ENCODE measurements at regions of chr1 and their contacts with region 1.

Region 1: GRCh38 chr1:236281654-236282424 is at the start of gene ERO1B:
- DNase-seq: peak; percentile 95 to 99 (median 97)
- ATAC-seq: peak; percentile 98
- H3K4me3 ChIP-seq: peak within 1 kb of the TSS; percentile 83
- H3K4me3 Mint-ChIP-seq: peak within 1 kb of the TSS; percentile 80 to 97 (median 94)
- H3K27ac ChIP-seq: peak within 1 kb of the TSS; percentile 82
- H3K27ac Mint-ChIP-seq: peak within 1 kb of the TSS; percentile 80 to 96 (median 95)
- H3K4me1 ChIP-seq: peaks cover 7 to 34% of the 10 kb centered on the region in 2 donors
- H3K4me1 Mint-ChIP-seq: peaks cover 29 to 82% (median 57%) of the 10 kb centered on the region in 7 donors
- H3K27me3 ChIP-seq: no peaks in the 10 kb centered on the region
- H3K27me3 Mint-ChIP-seq: peaks cover 0 to 10% (median 0%) of the 10 kb centered on the region in 5 donors
- total RNA-seq, gene ERO1B: 5.0 to 26.8 (median 16.0) TPM

Region 2: DNA sequence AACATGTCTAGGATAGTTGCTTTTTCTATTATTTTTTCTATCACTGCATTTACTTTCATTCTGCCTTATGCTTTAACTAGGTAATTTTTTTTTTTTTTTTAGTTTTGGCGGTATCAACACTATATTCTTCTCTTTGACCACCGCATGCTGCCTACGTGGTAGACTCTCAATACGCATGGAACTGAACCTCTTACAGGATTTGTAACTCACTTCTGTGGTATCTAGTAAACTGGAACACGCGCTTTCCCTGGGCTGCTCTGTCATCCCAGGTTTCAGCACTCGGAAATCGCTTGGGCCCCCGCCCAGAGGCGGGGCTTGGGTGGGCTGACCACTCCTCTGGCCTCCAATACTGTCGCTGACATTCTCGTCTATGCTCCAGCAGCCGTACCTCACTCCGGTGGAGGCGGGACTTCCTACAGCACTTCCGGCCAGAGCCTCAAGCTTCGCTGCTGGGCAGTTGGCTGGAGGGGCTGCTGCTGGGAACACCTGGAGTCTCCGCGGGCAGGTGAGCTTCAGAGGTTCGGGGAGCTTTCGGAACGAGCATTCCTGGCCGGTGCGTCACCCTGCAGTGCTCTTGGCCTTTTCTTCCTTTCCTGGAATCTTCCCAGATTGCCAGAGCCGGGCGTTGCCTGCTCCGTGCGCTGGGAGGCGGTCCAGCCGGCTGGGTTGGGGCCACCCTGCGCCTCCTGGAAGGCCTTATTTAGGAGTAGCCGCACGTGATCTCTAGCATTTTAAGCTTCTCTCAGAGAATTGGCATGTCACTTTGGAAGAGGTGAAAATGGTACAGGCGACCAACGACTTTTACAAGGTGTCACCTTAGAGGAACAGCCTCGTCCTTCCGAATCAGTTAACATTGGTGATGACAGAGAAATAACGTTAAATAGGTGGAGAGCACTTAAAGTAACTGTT is 914.6 kb before region 1 on chr1 and contains the start of gene TBCE:
- CTCF ChIA-PET with region 1: no interaction called
- POLR2A ChIA-PET with region 1: no interaction called
- intact Hi-C with region 1: loop called in 1 of 2 experiments (anchors 5 kb)
- DNase-seq: peak; percentile 61 to 89 (median 63)
- ATAC-seq: peak; percentile 99
- H3K4me3 ChIP-seq: peak within 1 kb of the TSS; percentile 90
- H3K4me3 Mint-ChIP-seq: peak within 1 kb of the TSS; percentile 91 to 99 (median 98)
- H3K27ac ChIP-seq: peak within 1 kb of the TSS; percentile 74
- H3K27ac Mint-ChIP-seq: peak within 1 kb of the TSS; percentile 86 to 97 (median 93)
- H3K4me1 ChIP-seq: peaks cover 0 to 11% of the 10 kb centered on the region in 2 donors
- H3K4me1 Mint-ChIP-seq: peaks cover 13 to 41% (median 38%) of the 10 kb centered on the region in 7 donors
- H3K27me3 ChIP-seq: no peaks in the 10 kb centered on the region
- H3K27me3 Mint-ChIP-seq: no peaks in the 10 kb centered on the region
- total RNA-seq, gene TBCE: 16.8 to 26.1 (median 20.6) TPM

Region 3: DNA sequence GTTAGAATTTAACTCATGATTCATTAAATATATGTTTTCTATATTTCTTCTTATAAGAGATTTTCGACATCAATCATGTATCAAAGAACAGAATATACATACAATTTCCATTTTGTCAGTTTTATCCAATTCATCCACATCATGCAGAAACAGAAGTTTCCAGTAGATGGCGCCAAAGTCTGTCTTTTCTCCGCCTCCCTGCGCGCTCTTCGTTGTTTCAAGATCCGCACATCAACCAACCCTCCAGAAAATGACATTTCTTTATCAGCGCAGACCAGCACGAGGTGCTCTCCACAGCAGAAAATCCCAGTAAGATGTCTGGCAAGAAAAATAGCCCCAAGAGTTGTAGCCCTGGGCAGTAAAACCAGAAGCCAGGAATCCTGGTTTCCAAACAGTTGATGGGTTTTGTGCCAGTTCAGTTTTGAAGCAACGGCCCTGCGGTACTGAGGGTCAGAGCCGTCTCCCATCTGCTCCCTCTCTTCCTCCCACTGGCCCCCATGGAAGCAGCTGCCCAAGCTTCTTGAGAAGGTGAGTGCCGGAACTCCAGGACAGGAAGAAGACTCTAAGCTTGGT is 178.1 kb before region 1 on chr1:
- CTCF ChIA-PET with region 1: no interaction called
- POLR2A ChIA-PET with region 1: no interaction called
- intact Hi-C with region 1: loop called in 1 of 2 experiments (anchors 5 kb)
- DNase-seq: peak; percentile 26 to 69 (median 51)
- ATAC-seq: peak; percentile 74
- H3K4me3 ChIP-seq: no peak overlapping the region
- H3K4me3 Mint-ChIP-seq: peak overlapping the region in 1 of 10 donors; percentile 12
- H3K27ac ChIP-seq: no peak overlapping the region
- H3K27ac Mint-ChIP-seq: no peak overlapping the region
- H3K4me1 ChIP-seq: no peaks in the 10 kb centered on the region
- H3K4me1 Mint-ChIP-seq: peaks cover 0 to 9% (median 3%) of the 10 kb centered on the region in 7 donors
- H3K27me3 ChIP-seq: no peaks in the 10 kb centered on the region
- H3K27me3 Mint-ChIP-seq: peaks cover 0 to 4% (median 0%) of the 10 kb centered on the region in 5 donors

Region 4: GRCh38 chr1:236394905-236395780 is 113.3 kb after region 1 on chr1:
- CTCF ChIA-PET with region 1: no interaction called
- POLR2A ChIA-PET with region 1: no interaction called
- intact Hi-C with region 1: loop called (anchors 1 to 5 kb)
- DNase-seq: peak in 3 of 9 donors; percentile 13 to 62 (median 29)
- ATAC-seq: peak; percentile 75
- H3K4me3 ChIP-seq: peak overlapping the region; percentile 70
- H3K4me3 Mint-ChIP-seq: peak overlapping the region; percentile 70 to 96 (median 86)
- H3K27ac ChIP-seq: no peak overlapping the region
- H3K27ac Mint-ChIP-seq: peak overlapping the region in 1 of 9 donors; percentile 86
- H3K4me1 ChIP-seq: peaks cover 3 to 10% of the 10 kb centered on the region in 2 donors
- H3K4me1 Mint-ChIP-seq: peaks cover 15 to 43% (median 22%) of the 10 kb centered on the region in 7 donors
- H3K27me3 ChIP-seq: peaks cover 0 to 5% of the 10 kb centered on the region in 2 donors
- H3K27me3 Mint-ChIP-seq: peaks cover 27 to 67% (median 51%) of the 10 kb centered on the region in 5 donors

Region 5: DNA sequence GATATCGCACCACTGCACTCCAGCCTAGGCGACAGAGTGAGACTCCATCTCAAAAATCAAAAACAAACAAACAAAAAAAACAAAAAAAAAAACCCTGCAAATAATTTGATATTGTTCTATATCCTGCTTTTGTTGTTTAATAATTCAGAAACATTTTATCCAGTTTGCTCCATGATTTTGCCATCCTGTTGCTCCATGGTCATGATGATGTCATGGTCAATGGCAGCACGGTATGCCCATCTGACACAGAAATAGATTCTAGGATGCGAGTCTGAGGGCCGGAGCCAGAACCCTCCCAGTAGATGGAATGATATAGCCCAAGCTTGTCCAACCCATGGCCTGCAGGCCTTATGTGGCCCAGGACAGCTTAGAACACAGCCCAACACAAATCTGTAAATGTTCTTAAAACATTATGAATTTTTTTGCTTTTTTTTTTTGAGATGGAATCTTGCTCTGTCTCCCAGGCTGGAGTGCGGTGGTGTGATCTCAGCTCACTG is 152.0 kb after region 1 on chr1:
- CTCF ChIA-PET with region 1: no interaction called
- POLR2A ChIA-PET with region 1: no interaction called
- intact Hi-C with region 1: no loop called
- DNase-seq: no peak
- ATAC-seq: no peak
- H3K4me3 ChIP-seq: no peak overlapping the region
- H3K4me3 Mint-ChIP-seq: no peak overlapping the region
- H3K27ac ChIP-seq: no peak overlapping the region
- H3K27ac Mint-ChIP-seq: no peak overlapping the region
- H3K4me1 ChIP-seq: no peaks in the 10 kb centered on the region
- H3K4me1 Mint-ChIP-seq: peaks cover 0 to 2% (median 0%) of the 10 kb centered on the region in 7 donors
- H3K27me3 ChIP-seq: no peaks in the 10 kb centered on the region
- H3K27me3 Mint-ChIP-seq: no peaks in the 10 kb centered on the region

Region 6: GRCh38 chr1:236523701-236524141 is 241.9 kb after region 1 on chr1 and contains the start of gene LGALS8:
- CTCF ChIA-PET with region 1: no interaction called
- POLR2A ChIA-PET with region 1: interaction called, 4 read pairs
- intact Hi-C with region 1: loop called (anchors 1 kb)
- DNase-seq: peak; percentile 68 to 87 (median 83)
- ATAC-seq: peak; percentile 90
- H3K4me3 ChIP-seq: peak within 1 kb of the TSS; percentile 70
- H3K4me3 Mint-ChIP-seq: peak within 1 kb of the TSS; percentile 93 to 100 (median 99)
- H3K27ac ChIP-seq: peak within 1 kb of the TSS; percentile 87
- H3K27ac Mint-ChIP-seq: peak within 1 kb of the TSS; percentile 97 to 99 (median 98)
- H3K4me1 ChIP-seq: peaks cover 4 to 5% of the 10 kb centered on the region in 2 donors
- H3K4me1 Mint-ChIP-seq: peaks cover 8 to 38% (median 35%) of the 10 kb centered on the region in 7 donors
- H3K27me3 ChIP-seq: no peaks in the 10 kb centered on the region
- H3K27me3 Mint-ChIP-seq: peaks cover 0 to 3% (median 0%) of the 10 kb centered on the region in 5 donors
- total RNA-seq, gene LGALS8: 114 to 143 (median 134) TPM

Region 7: GRCh38 chr1:236868625-236869467 is 587.0 kb after region 1 on chr1:
- CTCF ChIA-PET with region 1: no interaction called
- POLR2A ChIA-PET with region 1: no interaction called
- intact Hi-C with region 1: loop called in 1 of 2 experiments (anchors 10 kb)
- DNase-seq: peak in 8 of 9 donors; percentile 14 to 58 (median 46)
- ATAC-seq: peak; percentile 73
- H3K4me3 ChIP-seq: no peak overlapping the region
- H3K4me3 Mint-ChIP-seq: no peak overlapping the region
- H3K27ac ChIP-seq: no peak overlapping the region
- H3K27ac Mint-ChIP-seq: peak overlapping the region in 1 of 9 donors; percentile 41
- H3K4me1 ChIP-seq: no peaks in the 10 kb centered on the region
- H3K4me1 Mint-ChIP-seq: peaks cover 0 to 16% (median 0%) of the 10 kb centered on the region in 7 donors
- H3K27me3 ChIP-seq: no peaks in the 10 kb centered on the region
- H3K27me3 Mint-ChIP-seq: no peaks in the 10 kb centered on the region

Measured in naive thymus-derived CD4-positive, alpha-beta T cell (primary cell).